Mammary epithelial cell (primary cell): ENCODE measurements at regions of chr20 and their contacts with region 1.

Region 1: DNA sequence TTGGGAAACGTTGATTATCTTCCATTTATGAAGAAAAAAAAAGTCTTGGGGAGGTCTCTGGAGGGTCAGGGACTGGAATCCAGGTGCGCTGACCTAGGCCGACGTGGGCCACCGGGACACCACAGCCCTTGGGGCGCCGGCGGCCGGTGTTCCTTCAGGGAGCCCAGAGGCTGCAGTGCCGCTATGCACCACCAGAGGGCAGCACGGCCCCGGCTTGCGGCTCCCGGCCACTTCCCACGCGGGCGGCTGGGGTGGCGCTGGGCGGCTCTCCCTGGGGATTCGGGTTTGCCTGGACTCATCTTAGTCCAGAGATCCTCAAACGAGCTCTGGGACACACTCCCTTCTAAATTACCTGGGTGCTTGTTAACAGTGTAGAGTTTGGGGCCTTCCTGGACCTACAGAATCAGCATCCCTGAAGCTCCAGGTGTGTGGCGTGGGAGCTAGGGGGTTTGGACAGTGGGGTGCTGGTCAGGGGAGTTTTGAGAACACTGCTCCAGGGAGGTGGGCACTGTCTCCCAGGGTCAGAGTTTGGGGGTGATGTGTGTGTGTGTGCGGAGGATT is 23.0 kb upstream of the GTSF1L start:
- DNase-seq: peak; percentile 57
- H3K4me3 ChIP-seq: no peak overlapping the region
- H3K27ac ChIP-seq: no peak overlapping the region
- H3K4me1 ChIP-seq: peaks cover 22% of the 10 kb centered on the region
- H3K27me3 ChIP-seq: no peaks in the 10 kb centered on the region
- CTCF ChIP-seq: peak; percentile 85 to 99

Region 2: DNA sequence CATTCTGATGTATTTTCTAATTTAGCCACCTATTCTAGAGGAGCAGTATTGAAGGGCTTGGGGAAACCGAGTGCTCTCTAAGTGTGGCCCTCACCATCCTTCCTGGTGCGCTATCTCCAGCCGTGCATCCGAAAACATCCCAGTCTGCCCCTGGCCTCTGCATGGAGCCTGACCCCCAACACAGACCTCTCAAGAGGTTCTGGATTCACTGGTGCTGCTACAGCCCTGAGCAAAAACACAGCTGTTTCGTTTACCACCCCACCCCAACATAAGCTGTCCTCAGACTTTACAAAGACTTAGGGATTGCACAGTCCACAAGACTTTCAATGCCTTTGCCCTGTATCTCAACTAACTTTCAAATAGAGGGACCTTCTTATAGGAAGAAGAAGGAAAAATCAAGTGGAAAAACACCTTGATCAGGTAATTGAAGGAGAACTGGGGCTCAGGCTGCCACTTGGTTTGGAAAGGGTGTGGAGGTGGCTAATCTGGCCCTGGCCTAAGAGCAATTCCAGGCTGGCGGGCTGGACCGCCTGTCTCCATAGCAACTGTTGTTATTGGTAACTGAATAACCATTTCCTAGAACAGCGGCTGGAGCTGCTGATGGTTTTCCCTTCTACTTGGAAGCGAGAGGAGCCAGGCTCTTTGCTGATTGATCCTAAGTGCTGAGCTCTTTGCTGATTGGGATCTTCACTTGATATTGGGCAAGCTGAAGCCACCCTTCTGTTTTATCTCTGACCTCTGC is 74.7 kb after region 1 on chr20:
- CTCF ChIA-PET with region 1: no interaction called
- dilution Hi-C with region 1: no loop called
- in situ Hi-C with region 1: no loop called
- intact Hi-C with region 1: no loop called
- DNase-seq: peak; percentile 26
- H3K4me3 ChIP-seq: no peak overlapping the region
- H3K27ac ChIP-seq: no peak overlapping the region
- H3K4me1 ChIP-seq: peaks cover 13% of the 10 kb centered on the region
- H3K27me3 ChIP-seq: no peaks in the 10 kb centered on the region
- CTCF ChIP-seq: no peak

Region 3: GRCh38 chr20:43983359-43983758 is 233.5 kb after region 1 on chr20:
- CTCF ChIA-PET with region 1: no interaction called
- dilution Hi-C with region 1: no loop called
- in situ Hi-C with region 1: no loop called
- intact Hi-C with region 1: loop called (anchors 10 kb)
- DNase-seq: no peak
- H3K4me3 ChIP-seq: no peak overlapping the region
- H3K27ac ChIP-seq: no peak overlapping the region
- H3K4me1 ChIP-seq: no peaks in the 10 kb centered on the region
- H3K27me3 ChIP-seq: no peaks in the 10 kb centered on the region
- CTCF ChIP-seq: peak in 1 of 2 donors; percentile 33